GM12878 (cell line): ENCODE measurements at regions of chr2 and their contacts with region 1.

Region 1: GRCh38 chr2:196263181-196263747 is 91.9 kb upstream of the STK17B start:
- DNase-seq: peak; percentile 88
- ATAC-seq: peak; percentile 94
- H3K4me3 ChIP-seq: 0 out of 2 replicates have a peak overlapping the region, but pooled peaks have one; percentile 7
- H3K27ac ChIP-seq: peak overlapping the region; percentile 75
- H3K4me1 ChIP-seq: peaks cover 9% of the 10 kb centered on the region
- H3K27me3 ChIP-seq: no peaks in the 10 kb centered on the region
- CTCF ChIP-seq: no peak
- EP300 ChIP-seq: peak; percentile 20 to 52; a peak in 2 of 4 replicates
- POLR2A ChIP-seq: 0 out of 2 replicates have a peak, but pooled peaks have one; percentile 31
- RAD21 ChIP-seq: no peak

Region 2: GRCh38 chr2:196101325-196101991 is 161.8 kb before region 1 on chr2:
- CTCF ChIA-PET with region 1: no interaction called
- POLR2A ChIA-PET with region 1: interaction called, 6 read pairs
- RAD21 ChIA-PET with region 1: interaction called, 5 read pairs
- SMC1A ChIA-PET with region 1: interaction called, 10 read pairs
- in situ Hi-C with region 1: no loop called
- intact Hi-C with region 1: no loop called
- DNase-seq: peak; percentile 80
- ATAC-seq: peak; percentile 96
- H3K4me3 ChIP-seq: no peak overlapping the region
- H3K27ac ChIP-seq: peak overlapping the region; percentile 34
- H3K4me1 ChIP-seq: peaks cover 24% of the 10 kb centered on the region
- H3K27me3 ChIP-seq: no peaks in the 10 kb centered on the region
- CTCF ChIP-seq: peak in 1 of 3 experiments; percentile 14; a peak in 1 of 6 replicates
- EP300 ChIP-seq: peak; percentile 57 to 74
- POLR2A ChIP-seq: 0 out of 2 replicates have a peak, but pooled peaks have one; percentile 16
- RAD21 ChIP-seq: peak; percentile 26; the same call in 1 of the 2 replicates

Region 3: GRCh38 chr2:196205881-196206435 is 57.3 kb before region 1 on chr2:
- CTCF ChIA-PET with region 1: no interaction called
- POLR2A ChIA-PET with region 1: no interaction called
- RAD21 ChIA-PET with region 1: interaction called, 4 read pairs
- SMC1A ChIA-PET with region 1: interaction called, 12 read pairs
- in situ Hi-C with region 1: no loop called
- intact Hi-C with region 1: loop called (anchors 2 kb)
- DNase-seq: no peak
- ATAC-seq: no peak
- H3K4me3 ChIP-seq: no peak overlapping the region
- H3K27ac ChIP-seq: no peak overlapping the region
- H3K4me1 ChIP-seq: peaks cover 22% of the 10 kb centered on the region
- H3K27me3 ChIP-seq: no peaks in the 10 kb centered on the region
- CTCF ChIP-seq: no peak
- EP300 ChIP-seq: no peak
- POLR2A ChIP-seq: no peak
- RAD21 ChIP-seq: no peak

Region 4: DNA sequence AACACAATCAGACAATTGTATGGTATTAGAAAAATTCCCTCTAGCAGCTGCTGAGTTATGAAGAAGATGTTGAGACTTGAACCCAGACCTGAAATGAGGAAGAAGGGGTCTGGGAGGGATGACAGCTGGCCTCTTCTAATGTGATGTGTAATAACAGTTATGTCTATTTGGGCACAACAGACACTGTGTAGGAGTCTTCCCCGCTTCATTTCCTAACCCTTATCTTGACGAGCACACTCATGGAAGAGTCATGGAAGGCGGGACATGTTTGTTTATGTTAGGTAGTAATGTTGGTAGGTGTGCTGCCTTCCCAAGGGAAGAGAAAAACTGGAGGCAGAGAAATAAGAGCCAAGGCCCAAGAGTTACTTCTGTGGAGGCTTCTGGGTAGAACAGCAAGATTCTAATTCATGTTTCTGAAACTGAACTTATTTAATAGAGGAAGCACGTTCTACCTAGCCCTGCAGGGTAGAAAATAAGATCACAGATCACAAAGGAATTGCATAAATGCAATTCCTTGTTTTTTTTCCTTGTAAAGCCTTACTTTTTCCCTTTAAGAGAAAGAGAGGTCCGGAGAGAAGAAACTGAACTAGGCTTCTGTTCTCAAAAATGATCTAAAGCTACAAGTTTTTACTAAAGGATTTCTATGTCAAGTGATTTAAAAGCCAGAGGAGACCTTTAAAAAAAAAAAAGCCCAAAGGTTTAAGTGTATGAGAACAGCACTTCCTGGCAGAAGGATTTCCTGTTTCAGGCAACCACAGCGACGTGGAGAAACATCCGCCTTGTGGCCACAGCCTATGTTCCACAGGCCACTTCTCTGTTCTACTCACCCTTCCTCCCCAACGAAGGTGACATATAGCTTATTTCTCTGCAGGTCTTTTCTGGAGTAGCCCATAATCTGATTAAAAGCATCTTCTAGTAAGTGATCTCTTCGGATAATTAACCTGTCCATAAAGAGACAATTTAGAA is 23.4 kb before region 1 on chr2:
- CTCF ChIA-PET with region 1: interaction called, 16 read pairs
- POLR2A ChIA-PET with region 1: interaction called, 10 read pairs
- RAD21 ChIA-PET with region 1: interaction called, 8 read pairs
- SMC1A ChIA-PET with region 1: interaction called, 56 read pairs
- in situ Hi-C with region 1: no loop called
- intact Hi-C with region 1: loop called (anchors 2 kb)
- DNase-seq: peak; percentile 86
- ATAC-seq: peak; percentile 79
- H3K4me3 ChIP-seq: no peak overlapping the region
- H3K27ac ChIP-seq: peak overlapping the region; percentile 75
- H3K4me1 ChIP-seq: peaks cover 36% of the 10 kb centered on the region
- H3K27me3 ChIP-seq: no peaks in the 10 kb centered on the region
- CTCF ChIP-seq: 0 out of 6 replicates have a peak, but pooled peaks of 1 of the 3 experiments have one; percentile 3
- EP300 ChIP-seq: peak; percentile 74 to 85
- POLR2A ChIP-seq: no peak
- RAD21 ChIP-seq: 0 out of 2 replicates have a peak, but pooled peaks have one; percentile 19

Region 5: DNA sequence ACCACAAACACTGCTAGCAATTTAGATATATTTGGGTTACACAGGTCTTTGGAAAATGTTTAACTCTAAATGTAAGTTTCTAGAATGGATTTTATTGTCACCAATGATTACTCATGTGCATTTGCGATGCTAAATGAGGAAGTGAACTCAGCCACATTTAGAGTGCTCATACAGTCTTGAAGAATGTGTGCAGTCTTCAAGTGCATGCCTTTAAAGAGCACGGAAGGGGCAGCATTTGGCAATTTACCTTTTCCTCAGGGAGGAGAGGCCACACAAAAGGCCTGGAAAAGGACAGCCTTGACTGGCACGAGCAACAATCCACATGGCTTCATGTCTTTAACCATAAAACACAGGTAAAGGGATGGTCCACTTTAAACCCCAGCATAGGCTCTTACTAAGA is 13.4 kb before region 1 on chr2:
- CTCF ChIA-PET with region 1: interaction called, 17 read pairs
- POLR2A ChIA-PET with region 1: interaction called, 20 read pairs
- RAD21 ChIA-PET with region 1: interaction called, 10 read pairs
- SMC1A ChIA-PET with region 1: interaction called, 46 read pairs
- in situ Hi-C with region 1: no loop called
- intact Hi-C with region 1: no loop called
- DNase-seq: no peak
- ATAC-seq: peak; percentile 92
- H3K4me3 ChIP-seq: no peak overlapping the region
- H3K27ac ChIP-seq: no peak overlapping the region
- H3K4me1 ChIP-seq: peaks cover 4% of the 10 kb centered on the region
- H3K27me3 ChIP-seq: no peaks in the 10 kb centered on the region
- CTCF ChIP-seq: no peak
- EP300 ChIP-seq: no peak; a peak in 1 of 4 replicates
- POLR2A ChIP-seq: no peak
- RAD21 ChIP-seq: peak; percentile 10; the same call in 1 of the 2 replicates

Region 6: DNA sequence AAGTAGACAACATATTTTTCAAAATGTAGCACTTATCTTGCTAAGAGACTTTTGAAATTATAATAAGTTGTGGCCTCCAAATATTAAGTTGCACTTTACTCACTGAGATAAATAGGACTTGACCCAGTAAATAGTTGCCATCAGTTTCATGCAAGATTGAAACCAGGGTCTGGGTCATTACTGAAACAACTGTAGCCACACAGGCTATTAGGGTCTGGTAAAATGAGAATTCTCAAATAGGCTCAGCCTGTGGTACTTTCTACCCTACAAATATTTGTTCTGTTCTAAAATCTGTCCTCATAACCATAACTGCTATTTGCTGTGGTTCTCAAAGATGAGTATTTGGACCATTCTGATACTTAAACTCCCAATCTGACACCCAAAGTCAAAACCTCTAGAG is 23.6 kb after region 1 on chr2:
- CTCF ChIA-PET with region 1: no interaction called
- POLR2A ChIA-PET with region 1: no interaction called
- RAD21 ChIA-PET with region 1: no interaction called
- SMC1A ChIA-PET with region 1: no interaction called
- in situ Hi-C with region 1: no loop called
- intact Hi-C with region 1: no loop called
- DNase-seq: no peak
- ATAC-seq: peak; percentile 82
- H3K4me3 ChIP-seq: no peak overlapping the region
- H3K27ac ChIP-seq: peak overlapping the region; percentile 37; the same call in 1 of the 2 replicates
- H3K4me1 ChIP-seq: peaks cover 28% of the 10 kb centered on the region
- H3K27me3 ChIP-seq: no peaks in the 10 kb centered on the region
- CTCF ChIP-seq: no peak
- EP300 ChIP-seq: no peak
- POLR2A ChIP-seq: no peak
- RAD21 ChIP-seq: no peak